ENCODE measurements at regions of chr7 and their contacts with region 1.

Region 1: GRCh38 chr7:43729214-43729923 is at the start of gene COA1:
- DNase-seq: peak; percentile 76 to 96 (median 84)
- ATAC-seq: peak; percentile 85
- H3K4me3 ChIP-seq: peak within 1 kb of the TSS; percentile 61
- H3K27ac ChIP-seq: peak within 1 kb of the TSS; percentile 80
- H3K4me1 ChIP-seq: peaks cover 9 to 11% of the 10 kb centered on the region in 2 experiments
- H3K27me3 ChIP-seq: no peaks in the 10 kb centered on the region
- CTCF ChIP-seq: no peak
- EP300 ChIP-seq: peak; percentile 56; the same call in 1 of the 2 replicates
- POLR2A ChIP-seq: peak; percentile 95
- RAD21 ChIP-seq: 0 out of 4 replicates have a peak, but pooled peaks of 1 of the 2 experiments have one; percentile 13
- polyA plus RNA-seq, gene COA1: 432 to 463 TPM

Region 2: GRCh38 chr7:43621729-43622448 is 107.5 kb before region 1 on chr7:
- CTCF ChIA-PET with region 1: no interaction called
- POLR2A ChIA-PET with region 1: no interaction called
- in situ Hi-C with region 1: no loop called
- intact Hi-C with region 1: no loop called
- DNase-seq: no peak
- ATAC-seq: no peak
- H3K4me3 ChIP-seq: no peak overlapping the region
- H3K27ac ChIP-seq: no peak overlapping the region
- H3K4me1 ChIP-seq: no peaks in the 10 kb centered on the region
- H3K27me3 ChIP-seq: no peaks in the 10 kb centered on the region
- CTCF ChIP-seq: no peak
- EP300 ChIP-seq: no peak
- POLR2A ChIP-seq: 0 out of 2 replicates have a peak, but pooled peaks have one; percentile 12
- RAD21 ChIP-seq: no peak

Region 3: DNA sequence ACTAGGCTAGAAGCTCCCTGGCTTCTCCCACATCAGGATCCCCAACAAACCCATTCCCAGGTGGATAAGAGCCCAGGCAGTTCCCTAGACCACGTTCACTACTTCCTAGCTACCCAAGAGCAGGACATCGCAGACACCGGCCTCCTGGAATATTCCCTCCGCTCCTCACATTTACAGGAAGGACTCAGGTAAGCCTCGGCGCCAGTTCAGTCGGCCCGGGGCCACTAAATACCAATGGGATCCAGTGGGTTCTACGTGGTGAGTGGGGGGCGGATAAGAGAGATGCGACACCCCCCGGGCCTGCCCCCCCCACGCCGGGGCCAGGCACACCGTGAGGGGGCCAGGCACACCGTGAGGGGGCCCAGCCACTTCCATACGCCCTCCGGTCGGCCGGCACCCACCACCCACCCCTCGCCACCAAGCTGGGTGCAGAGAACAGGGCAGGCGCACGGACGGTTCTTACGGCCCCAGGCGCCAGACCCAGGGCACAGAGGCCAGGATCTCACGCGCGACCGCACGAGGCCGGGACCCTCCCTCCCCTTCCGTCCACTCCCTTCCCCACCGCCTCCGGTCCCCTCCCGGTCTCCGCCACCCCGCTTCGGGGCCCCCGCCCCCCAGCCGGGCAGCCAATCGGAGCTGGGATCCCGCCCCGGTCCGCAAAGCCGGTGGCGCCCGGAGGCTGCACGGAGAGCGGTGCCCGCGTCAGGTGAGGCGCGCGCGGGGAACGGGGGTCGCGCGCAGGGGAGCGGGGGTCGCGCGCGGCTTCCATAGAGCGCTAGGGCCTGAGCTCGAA is 28.9 kb after region 1 on chr7 and contains the start of gene BLVRA:
- CTCF ChIA-PET with region 1: no interaction called
- POLR2A ChIA-PET with region 1: interaction called, 32 read pairs
- in situ Hi-C with region 1: no loop called
- intact Hi-C with region 1: no loop called
- DNase-seq: peak; percentile 79 to 98 (median 96)
- ATAC-seq: peak; percentile 84
- H3K4me3 ChIP-seq: peak within 1 kb of the TSS; percentile 65
- H3K27ac ChIP-seq: peak within 1 kb of the TSS; percentile 77
- H3K4me1 ChIP-seq: peaks cover 41 to 48% of the 10 kb centered on the region in 2 experiments
- H3K27me3 ChIP-seq: no peaks in the 10 kb centered on the region
- CTCF ChIP-seq: no peak
- EP300 ChIP-seq: no peak
- POLR2A ChIP-seq: peak; percentile 65
- RAD21 ChIP-seq: no peak
- polyA plus RNA-seq, gene BLVRA: 125 to 147 TPM

Region 4: GRCh38 chr7:43808135-43808809 is 78.9 kb after region 1 on chr7:
- CTCF ChIA-PET with region 1: no interaction called
- POLR2A ChIA-PET with region 1: no interaction called
- in situ Hi-C with region 1: no loop called
- intact Hi-C with region 1: loop called (anchors 2 kb)
- DNase-seq: no peak
- ATAC-seq: no peak
- H3K4me3 ChIP-seq: no peak overlapping the region
- H3K27ac ChIP-seq: no peak overlapping the region
- H3K4me1 ChIP-seq: peaks cover 0 to 3% of the 10 kb centered on the region in 2 experiments; a peak in 2 of 5 replicates
- H3K27me3 ChIP-seq: no peaks in the 10 kb centered on the region
- CTCF ChIP-seq: no peak
- EP300 ChIP-seq: no peak
- POLR2A ChIP-seq: no peak
- RAD21 ChIP-seq: no peak